ENCODE measurements at regions of chr1 and their contacts with region 1.

Region 1: DNA sequence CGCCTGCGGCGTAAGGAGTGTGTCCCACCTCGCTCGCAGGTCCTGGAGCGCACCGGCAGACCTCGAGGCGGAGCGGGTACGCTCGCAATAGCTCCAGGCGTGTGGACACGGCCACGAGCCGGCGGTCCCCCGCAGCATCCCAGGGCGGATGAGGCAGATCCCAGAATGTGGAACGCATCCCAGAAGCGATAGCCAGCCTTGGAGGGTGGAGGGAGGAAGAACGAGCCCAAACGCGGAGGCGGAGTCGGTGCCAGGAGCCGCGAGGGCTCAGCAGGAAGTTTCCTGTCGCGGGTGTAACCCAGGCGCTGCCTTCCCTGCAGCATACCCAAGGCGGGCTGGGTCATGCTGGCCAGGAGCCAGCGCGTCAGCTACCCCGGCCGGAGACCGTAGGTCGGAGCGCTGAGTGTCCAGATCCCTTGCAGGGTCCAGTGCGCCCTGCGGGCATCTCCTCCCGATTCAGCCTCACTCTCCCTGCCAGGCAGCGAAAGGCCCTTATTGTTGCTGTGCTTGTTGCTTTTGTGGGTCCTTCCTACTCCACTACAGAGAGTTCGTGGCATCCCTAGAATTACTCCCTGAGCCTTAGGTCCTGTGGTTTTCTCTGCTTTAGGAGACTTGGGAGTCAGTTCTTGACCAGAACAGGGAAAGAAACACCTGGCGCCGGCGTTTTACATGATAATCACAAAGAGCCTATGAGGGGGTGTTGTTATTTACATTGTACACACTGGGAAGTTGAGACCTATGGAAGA is 27.7 kb downstream of the STYXL2 start:
- DNase-seq: peak; percentile 39
- H3K4me3 Mint-ChIP-seq: peak overlapping the region; percentile 73
- H3K27ac Mint-ChIP-seq: no peak overlapping the region
- H3K4me1 Mint-ChIP-seq: peaks cover 5% of the 10 kb centered on the region
- H3K27me3 Mint-ChIP-seq: peaks cover 6% of the 10 kb centered on the region

Region 2: DNA sequence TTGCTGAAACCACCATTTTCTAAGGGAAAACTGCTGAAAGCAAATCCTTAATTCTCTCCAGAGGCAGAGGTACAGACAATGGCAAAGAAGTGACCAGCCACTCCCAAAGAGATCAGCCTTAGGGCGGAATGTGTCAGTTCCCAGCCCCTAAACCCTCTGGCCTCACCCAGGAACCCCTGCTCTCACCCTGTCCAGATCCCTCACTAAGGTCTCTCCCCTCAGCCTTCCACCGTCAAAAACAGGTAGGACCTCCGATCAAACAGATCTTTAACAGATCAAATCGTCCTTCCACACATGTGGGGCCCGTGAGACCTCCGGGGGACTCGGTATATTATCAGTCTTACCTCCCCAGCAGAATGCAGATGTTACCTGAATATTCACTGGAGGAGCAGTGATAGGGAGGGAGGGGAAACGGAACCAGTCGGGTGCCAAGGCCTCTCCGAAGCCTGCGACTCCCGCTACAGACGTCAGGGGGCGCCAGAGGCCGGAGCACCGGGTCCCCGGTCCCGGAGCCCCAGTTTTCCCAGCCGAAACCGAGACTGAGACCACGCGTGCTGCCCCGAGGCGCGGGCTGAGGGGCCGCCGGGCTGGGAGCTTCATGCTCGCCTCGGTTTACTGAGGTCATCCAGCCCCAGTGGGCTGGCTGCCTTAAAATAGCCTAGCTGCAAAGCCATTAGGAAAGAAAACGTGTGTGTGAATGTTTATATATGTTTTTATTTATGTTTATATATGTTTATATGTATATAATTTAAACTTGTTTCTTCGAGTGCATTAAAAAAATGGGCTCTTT is 55.0 kb before region 1 on chr1:
- CTCF ChIA-PET with region 1: interaction called, 11 read pairs
- POLR2A ChIA-PET with region 1: no interaction called
- DNase-seq: peak; percentile 80
- H3K4me3 Mint-ChIP-seq: no peak overlapping the region
- H3K27ac Mint-ChIP-seq: no peak overlapping the region
- H3K4me1 Mint-ChIP-seq: peaks cover 1% of the 10 kb centered on the region
- H3K27me3 Mint-ChIP-seq: peaks cover 2% of the 10 kb centered on the region

Measured in activated CD4-positive, alpha-beta memory T cell treated with anti-CD3 and anti-CD28 coated beads, Interleukin-2, amount 10 ng/mL, durations not matched to agents 7 days and 5 days (primary cell).